ENCODE measurements at regions of chr1 and their contacts with region 1.

Region 1: DNA sequence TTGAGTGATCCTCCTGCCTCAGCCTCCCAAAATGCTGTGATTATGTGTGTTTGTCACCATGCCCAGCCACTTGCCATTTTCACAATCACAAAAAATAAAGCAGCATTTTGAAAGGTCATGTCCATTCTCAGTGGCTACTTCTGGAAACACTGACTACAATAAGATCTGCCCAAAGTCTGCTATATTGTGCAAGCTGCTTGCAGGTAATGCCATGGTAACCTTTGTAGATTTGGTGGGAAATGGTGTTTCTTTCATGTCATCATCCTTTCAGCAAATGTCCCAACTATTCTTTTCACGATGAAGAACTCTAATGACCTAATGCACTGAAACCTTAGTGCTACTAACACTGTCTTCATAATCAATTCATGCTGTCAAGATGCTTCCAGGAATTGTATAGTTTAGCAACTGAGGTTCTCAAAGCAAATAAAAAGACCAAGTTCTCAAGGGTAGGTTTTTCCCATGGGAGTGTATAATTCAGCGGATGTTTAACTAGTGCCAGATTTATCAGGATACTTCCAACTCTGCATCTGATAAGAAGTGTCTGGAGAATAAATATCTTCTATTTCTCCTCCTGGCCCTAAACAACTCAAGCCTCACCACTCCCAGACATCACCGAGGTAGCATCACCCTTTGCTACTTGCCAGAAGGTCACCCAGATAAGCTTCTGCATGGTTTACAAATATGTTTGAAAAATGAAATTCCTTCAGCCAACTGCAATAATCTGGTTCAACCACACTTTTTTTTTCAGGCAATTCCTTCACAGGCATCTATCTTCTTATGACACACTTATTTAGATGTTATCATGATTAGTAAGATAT is 132.0 kb upstream of the ZC3H11B start:
- DNase-seq: no peak
- ATAC-seq: no peak

Region 2: DNA sequence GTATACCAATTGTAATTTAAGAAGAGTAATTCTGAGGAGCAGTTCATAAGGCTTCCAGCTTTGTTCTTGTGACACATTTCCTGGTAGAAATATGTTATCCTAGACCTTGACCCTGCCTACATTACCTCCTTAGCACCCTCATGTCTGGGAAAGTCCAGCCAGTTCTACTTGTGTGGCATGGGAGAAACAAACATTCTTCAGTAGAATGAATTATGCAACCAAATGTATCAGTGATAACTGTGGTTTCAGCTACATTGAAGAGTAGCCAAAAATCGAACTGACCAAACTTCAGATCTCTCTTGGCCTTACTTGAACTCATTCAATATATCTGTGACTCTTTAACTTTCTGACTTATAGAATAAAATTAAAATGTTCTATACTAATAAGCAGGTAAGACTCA is 879.3 kb before region 1 on chr1:
- intact Hi-C with region 1: no loop called
- DNase-seq: no peak
- ATAC-seq: no peak

Region 3: GRCh38 chr1:219416594-219417238 is 328.1 kb before region 1 on chr1:
- intact Hi-C with region 1: loop called (anchors 10 kb)
- DNase-seq: no peak
- ATAC-seq: peak; percentile 43

Region 4: GRCh38 chr1:219582296-219582695 is 162.6 kb before region 1 on chr1:
- intact Hi-C with region 1: loop called (anchors 5 kb)
- DNase-seq: no peak
- ATAC-seq: no peak

Region 5: DNA sequence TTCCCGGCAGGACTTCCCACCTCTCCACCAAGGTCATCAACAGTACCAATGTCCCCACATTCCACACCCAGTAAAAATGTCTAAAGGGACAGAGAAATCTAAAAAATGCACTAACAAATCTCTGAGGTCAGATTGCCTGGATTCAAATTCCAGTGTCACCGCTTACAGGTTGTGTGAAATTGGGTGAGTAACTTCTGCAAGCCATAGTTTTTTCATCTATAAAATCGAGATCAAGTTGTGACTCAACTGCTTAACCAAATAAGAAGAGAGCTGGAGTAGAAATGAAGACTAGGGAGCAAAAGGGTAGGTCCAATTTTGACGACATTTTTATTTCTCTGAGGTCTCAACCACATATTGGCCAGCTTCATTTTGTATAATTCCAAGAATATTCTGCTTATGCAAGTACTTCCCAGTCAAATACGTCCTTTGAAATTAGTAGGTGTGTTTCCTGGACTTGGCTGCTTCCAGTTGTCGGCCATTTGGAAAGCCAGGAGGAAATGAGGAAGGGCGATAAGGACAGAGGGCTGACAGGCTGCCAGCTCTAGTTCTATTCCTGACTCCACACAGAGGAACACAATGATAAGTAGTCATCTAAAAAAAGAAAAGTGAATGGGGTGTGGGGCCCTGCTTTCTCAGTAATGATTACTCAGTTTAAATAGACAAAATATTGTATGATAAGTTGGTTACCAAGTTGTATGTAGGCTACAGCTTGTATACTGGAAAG is 74.3 kb before region 1 on chr1:
- intact Hi-C with region 1: loop called (anchors 5 kb)
- DNase-seq: no peak
- ATAC-seq: peak; percentile 87

Region 6: DNA sequence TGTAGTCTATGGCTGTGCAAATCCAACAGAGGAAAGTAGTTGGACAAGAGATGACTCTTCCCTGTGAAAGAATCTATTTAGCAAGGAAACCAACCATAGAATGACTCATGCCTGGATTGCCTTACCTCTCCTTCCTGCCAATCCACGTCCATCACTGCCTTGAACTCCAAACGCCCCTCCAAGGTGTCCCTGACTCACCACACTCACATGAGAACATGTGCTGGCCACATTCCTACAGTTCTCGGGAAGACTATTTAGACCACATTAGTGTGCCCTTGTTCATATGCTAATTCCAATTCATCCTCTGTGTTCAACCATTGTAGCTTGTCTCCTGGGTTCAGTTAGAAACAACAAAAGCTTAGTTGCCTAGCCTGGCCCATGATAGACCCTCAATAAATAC is 26.2 kb after region 1 on chr1:
- intact Hi-C with region 1: no loop called
- DNase-seq: no peak
- ATAC-seq: no peak

Region 7: GRCh38 chr1:219792337-219793021 is 47.6 kb after region 1 on chr1:
- intact Hi-C with region 1: loop called (anchors 2 kb)
- DNase-seq: no peak
- ATAC-seq: peak; percentile 70